PC-9 (cell line): ENCODE measurements at regions of chr1 and their contacts with region 1.

Region 1: DNA sequence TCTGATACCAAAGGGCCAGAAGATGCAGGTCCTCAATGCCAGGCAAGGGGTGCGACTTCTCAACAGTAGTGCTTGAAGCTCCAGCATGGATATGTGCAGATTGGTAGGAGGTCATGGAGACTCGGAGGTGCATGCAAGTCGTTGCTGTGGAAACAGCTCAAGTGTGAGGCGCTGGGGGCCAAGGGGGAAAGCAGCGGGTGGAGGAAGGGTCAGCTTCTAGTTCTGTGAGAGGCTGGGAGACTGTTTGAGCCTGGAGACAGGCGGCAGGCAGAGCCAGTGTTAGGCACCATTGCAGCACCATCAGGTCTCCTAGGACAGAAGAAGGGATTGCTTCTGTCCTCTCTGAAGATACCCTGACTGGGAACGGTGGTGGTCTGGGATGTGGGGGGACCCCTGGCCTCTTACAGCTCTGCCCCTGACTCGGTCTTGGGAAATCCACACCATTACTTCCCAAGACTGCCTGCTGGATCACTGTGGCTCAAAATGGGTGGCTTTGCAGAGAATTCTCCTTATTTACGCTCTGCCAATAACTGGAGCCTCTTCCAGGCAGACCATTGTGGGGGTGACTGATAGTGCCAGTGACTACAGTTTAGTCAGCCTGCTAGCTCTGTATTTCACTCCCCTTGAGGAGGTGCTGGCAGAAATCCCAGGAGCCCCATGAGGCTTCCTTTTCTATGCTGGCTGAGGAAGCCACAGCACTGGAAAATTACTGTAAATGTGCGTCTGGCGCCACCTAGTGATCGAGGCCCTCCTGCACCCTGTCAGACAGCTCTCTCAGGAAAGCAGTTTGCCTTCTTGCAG is 46.3 kb upstream of the VANGL1 start:
- DNase-seq: peak; percentile 87 to 91
- H3K4me3 ChIP-seq: no peak overlapping the region
- H3K27ac ChIP-seq: no peak overlapping the region
- H3K4me1 ChIP-seq: peaks cover 25% of the 10 kb centered on the region
- H3K27me3 ChIP-seq: no peaks in the 10 kb centered on the region
- CTCF ChIP-seq: peak; percentile 99

Region 2: GRCh38 chr1:115219937-115220336 is 375.5 kb before region 1 on chr1:
- CTCF ChIA-PET with region 1: interaction called, 11 read pairs
- POLR2A ChIA-PET with region 1: no interaction called
- intact Hi-C with region 1: no loop called
- DNase-seq: no peak
- H3K4me3 ChIP-seq: no peak overlapping the region
- H3K27ac ChIP-seq: no peak overlapping the region
- H3K4me1 ChIP-seq: peaks cover 66% of the 10 kb centered on the region
- H3K27me3 ChIP-seq: no peaks in the 10 kb centered on the region
- CTCF ChIP-seq: no peak

Region 3: DNA sequence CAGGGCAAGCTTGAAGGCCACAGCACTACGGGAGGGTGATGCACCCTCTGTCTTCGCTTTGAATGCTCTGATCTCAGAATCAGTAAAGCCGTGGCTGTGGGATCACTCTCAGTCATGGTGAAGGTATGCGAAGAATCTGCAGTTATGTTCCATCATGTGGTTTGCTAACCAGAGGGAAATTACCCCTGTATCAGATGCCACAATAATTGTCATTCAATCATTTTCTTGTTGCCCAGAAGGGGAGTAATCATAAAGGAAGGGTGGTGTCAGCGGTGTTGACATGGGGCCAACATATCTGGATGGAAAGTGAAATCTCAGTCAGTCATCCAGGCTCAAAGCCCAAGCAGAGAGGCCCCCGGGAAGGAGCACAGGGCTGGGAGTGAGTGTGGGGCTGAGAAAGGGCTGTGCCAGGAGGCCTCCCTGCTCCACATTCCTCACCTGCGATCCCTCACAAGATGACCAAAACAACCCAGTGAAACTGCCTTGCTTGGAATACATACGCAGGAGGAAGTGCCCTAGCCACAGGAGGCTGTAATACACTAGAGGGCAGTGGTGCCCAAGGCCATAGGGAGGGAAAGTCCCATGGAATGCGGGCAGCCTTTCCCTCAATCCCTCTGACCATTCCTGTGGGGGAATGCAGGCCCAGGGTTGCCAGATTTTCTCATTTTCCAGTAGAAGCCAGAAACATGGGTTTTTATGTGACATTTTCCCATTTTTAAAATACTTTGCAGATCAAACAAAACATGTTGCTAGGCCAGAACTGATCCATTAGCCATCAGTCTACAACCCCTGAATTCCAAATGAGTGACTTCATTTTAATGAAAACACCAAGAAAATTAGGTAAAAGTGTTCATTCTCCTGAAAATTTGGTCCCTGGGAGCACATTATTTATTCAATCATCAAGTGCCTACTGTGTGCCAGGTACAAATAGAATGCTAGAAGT is 49.4 kb before region 1 on chr1:
- CTCF ChIA-PET with region 1: interaction called, 4 read pairs
- POLR2A ChIA-PET with region 1: no interaction called
- intact Hi-C with region 1: loop called (anchors 1 kb)
- DNase-seq: peak; percentile 92 to 99
- H3K4me3 ChIP-seq: peak overlapping the region; percentile 9; the same call in 1 of the 2 replicates
- H3K27ac ChIP-seq: peak overlapping the region; percentile 91
- H3K4me1 ChIP-seq: peaks cover 35% of the 10 kb centered on the region
- H3K27me3 ChIP-seq: no peaks in the 10 kb centered on the region
- CTCF ChIP-seq: peak; percentile 82

Region 4: GRCh38 chr1:115980998-115981993 is 385.8 kb after region 1 on chr1:
- CTCF ChIA-PET with region 1: no interaction called
- POLR2A ChIA-PET with region 1: no interaction called
- intact Hi-C with region 1: loop called (anchors 5 kb)
- DNase-seq: peak; percentile 40 to 55
- H3K4me3 ChIP-seq: no peak overlapping the region
- H3K27ac ChIP-seq: no peak overlapping the region
- H3K4me1 ChIP-seq: peaks cover 26% of the 10 kb centered on the region
- H3K27me3 ChIP-seq: no peaks in the 10 kb centered on the region
- CTCF ChIP-seq: peak; percentile 98